ENCODE measurements at regions of chr17 and their contacts with region 1.

Region 1: DNA sequence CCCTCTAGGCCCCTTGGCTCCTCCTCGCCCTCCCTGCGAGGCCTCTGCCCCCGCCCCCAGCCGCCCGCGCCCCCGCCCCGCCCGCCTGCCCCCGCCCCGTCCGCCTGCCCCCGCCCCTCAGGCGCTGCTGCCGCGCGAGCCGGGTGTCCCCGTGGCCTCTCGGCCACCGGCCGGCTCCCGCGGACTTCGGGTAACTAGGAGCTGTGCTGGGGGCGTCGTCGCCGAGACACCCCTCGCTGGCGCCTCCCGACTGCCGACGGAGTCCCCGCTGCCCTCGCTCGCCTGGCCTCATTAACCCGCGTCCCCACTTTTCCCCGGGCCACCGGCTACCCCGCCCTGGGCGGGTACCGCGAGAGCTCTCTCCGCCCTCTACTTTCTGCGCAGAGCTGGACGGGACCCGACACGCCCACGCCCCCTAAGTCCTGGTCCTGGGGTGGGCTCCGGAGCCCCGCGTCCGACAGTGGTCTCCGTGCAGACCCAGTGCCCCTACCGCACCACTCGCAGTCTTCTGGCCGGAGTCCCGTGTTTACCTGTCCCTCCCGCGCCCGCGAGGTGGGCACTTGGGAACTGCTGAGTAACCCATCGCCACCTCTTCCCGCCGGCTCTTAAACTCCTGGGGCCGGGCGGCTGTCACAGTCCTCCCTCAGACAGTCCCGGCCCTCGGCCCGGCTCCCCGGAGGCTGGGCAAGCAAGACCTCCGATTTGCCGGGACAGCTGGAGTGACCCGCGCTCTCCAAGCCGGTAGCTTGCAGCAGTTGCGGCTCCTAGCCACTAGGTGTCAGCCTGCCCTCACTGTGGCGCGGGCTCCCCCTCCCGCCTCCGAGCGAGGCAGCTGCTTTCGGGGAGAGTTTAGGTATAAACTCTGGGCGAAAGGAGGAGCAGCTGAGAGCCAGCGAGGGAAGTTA is at the start of gene TLCD1:
- DNase-seq: peak; percentile 95
- ATAC-seq: peak; percentile 64
- H3K4me3 Mint-ChIP-seq: peak within 1 kb of the TSS; percentile 94
- H3K27ac Mint-ChIP-seq: peak within 1 kb of the TSS; percentile 99
- H3K4me1 Mint-ChIP-seq: peaks cover 64% of the 10 kb centered on the region
- H3K27me3 Mint-ChIP-seq: no peaks in the 10 kb centered on the region
- total RNA-seq, gene TLCD1: 2.8 to 3.0 TPM

Region 2: DNA sequence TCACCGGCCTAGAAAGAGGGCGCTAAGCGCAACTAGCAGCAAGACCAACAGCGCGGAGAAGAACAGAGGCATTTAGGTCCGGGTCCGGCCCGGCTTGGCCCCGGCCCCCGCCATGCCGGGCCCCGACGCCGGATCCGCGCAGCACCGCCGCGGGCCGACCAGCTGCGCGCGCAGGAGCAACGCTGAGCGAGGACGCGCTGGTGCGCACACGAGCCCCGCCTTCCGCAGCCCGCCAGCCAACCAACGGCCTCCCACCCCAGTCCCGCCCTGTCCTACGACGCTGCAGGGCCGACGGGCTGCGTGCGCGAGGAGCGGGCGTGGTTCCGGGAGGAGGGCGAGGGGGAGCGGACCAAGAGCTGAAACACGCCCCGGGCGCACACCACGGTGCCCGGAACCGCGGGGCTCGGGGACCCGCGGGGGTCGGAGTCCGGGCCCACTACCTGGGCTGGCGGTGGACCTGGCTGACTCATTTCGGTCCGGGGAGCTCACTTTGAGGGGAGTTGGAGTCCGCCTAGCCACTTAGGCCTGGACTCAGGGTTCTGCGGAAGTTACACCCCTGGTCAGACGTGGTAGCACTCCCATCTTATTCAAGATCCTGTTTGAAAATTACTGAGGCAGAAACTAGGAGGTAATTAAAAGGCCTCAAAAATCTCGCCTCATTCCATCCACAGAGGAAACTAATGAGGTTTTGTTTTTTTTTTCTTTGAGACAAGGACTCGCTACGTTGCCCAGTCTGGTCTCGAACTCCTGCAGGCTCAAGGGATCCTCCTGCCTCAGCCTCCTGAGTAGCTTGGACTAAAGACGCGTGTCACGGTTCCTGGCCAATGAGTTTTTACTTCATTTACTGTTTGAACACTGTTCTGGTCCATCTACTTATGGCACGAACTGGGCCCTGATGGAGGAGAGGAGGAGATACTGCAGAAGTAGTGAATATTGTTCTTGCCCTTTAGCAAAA is 81.2 kb before region 1 on chr17 and contains the start of gene BLTP2:
- CTCF ChIA-PET with region 1: interaction called, 15 read pairs
- POLR2A ChIA-PET with region 1: interaction called, 5 read pairs
- DNase-seq: peak; percentile 97
- ATAC-seq: peak; percentile 98
- H3K4me3 Mint-ChIP-seq: peak within 1 kb of the TSS; percentile 87
- H3K27ac Mint-ChIP-seq: peak within 1 kb of the TSS; percentile 84
- H3K4me1 Mint-ChIP-seq: peaks cover 39% of the 10 kb centered on the region
- H3K27me3 Mint-ChIP-seq: no peaks in the 10 kb centered on the region
- total RNA-seq, gene BLTP2: 162 to 169 TPM

Region 3: DNA sequence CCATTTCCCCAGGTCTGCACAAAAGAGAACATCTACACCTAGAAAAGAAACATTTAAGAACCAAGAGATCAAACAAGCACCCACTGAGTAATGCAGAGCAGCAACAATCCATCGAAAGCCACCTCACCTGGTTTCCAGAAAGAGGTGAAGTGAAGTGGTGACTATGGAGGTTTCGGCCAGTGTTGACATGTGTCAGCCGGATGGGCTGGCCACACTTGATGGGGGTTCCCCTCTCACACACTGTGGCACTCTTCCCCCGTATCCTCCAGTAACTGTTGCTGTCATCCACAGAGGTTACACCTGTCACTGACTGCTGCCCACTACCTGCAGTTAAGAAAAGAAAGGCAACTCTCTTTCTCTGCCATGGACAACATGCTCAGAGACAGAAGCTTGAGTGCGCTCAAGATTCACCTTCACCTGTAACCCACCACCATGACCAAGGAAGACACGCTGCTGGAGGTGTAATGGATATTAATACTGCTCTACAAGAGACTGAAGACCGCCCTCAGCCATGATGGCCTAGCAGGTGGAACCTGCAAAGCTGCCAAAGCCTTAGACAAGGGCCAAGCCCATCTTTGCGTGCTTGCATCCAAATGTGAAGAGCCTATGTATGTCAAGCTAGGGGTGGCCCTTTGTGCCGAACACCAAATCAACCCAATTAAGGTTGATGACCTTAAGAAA is 71.2 kb before region 1 on chr17:
- CTCF ChIA-PET with region 1: no interaction called
- POLR2A ChIA-PET with region 1: no interaction called
- DNase-seq: no peak
- ATAC-seq: no peak
- H3K4me3 Mint-ChIP-seq: no peak overlapping the region
- H3K27ac Mint-ChIP-seq: no peak overlapping the region
- H3K4me1 Mint-ChIP-seq: peaks cover 8% of the 10 kb centered on the region
- H3K27me3 Mint-ChIP-seq: no peaks in the 10 kb centered on the region

Region 4: GRCh38 chr17:28758411-28759121 is 32.1 kb after region 1 on chr17:
- CTCF ChIA-PET with region 1: interaction called, 736 read pairs
- POLR2A ChIA-PET with region 1: interaction called, 212 read pairs
- DNase-seq: no peak
- ATAC-seq: no peak
- H3K4me3 Mint-ChIP-seq: no peak overlapping the region
- H3K27ac Mint-ChIP-seq: no peak overlapping the region
- H3K4me1 Mint-ChIP-seq: peaks cover 19% of the 10 kb centered on the region
- H3K27me3 Mint-ChIP-seq: no peaks in the 10 kb centered on the region

Region 5: GRCh38 chr17:28871056-28871579 is 144.6 kb after region 1 on chr17:
- CTCF ChIA-PET with region 1: interaction called, 14 read pairs
- POLR2A ChIA-PET with region 1: no interaction called
- DNase-seq: peak; percentile 76
- ATAC-seq: peak; percentile 99
- H3K4me3 Mint-ChIP-seq: no peak overlapping the region
- H3K27ac Mint-ChIP-seq: peak overlapping the region; percentile 97
- H3K4me1 Mint-ChIP-seq: peaks cover 16% of the 10 kb centered on the region
- H3K27me3 Mint-ChIP-seq: no peaks in the 10 kb centered on the region

Region 6: DNA sequence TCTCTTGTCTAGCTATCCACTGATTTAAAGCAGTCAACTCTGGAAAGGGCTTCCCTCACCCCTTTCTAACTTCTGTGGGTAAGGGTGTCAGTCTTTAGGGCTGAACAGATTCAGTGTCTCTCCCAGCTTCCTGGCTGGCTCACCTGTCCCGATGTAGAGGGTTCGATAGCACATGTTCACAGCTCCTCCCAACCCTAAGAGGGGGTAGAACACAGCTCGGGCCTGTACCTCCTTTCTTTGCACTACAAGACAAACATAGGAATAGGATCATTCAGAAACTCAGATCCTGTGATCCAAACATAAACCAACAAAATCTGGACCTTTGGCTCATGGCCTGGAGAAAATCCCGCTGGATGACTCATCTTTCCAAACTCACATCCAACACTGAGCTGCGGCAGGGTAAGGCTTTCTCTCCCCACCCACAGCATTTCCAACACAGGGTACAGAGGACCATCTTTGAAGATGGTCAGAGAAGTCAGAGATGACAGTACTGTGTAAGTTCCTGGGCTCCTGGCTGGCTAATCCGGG is 182.2 kb after region 1 on chr17:
- CTCF ChIA-PET with region 1: interaction called, 41 read pairs
- POLR2A ChIA-PET with region 1: interaction called, 14 read pairs
- DNase-seq: no peak
- ATAC-seq: no peak
- H3K4me3 Mint-ChIP-seq: no peak overlapping the region
- H3K27ac Mint-ChIP-seq: no peak overlapping the region
- H3K4me1 Mint-ChIP-seq: no peaks in the 10 kb centered on the region
- H3K27me3 Mint-ChIP-seq: no peaks in the 10 kb centered on the region

Region 7: GRCh38 chr17:28946239-28946638 is 219.8 kb after region 1 on chr17:
- CTCF ChIA-PET with region 1: interaction called, 84 read pairs
- POLR2A ChIA-PET with region 1: interaction called, 16 read pairs
- DNase-seq: no peak
- ATAC-seq: no peak
- H3K4me3 Mint-ChIP-seq: peak overlapping the region; percentile 31
- H3K27ac Mint-ChIP-seq: peak overlapping the region; percentile 60
- H3K4me1 Mint-ChIP-seq: peaks cover 59% of the 10 kb centered on the region
- H3K27me3 Mint-ChIP-seq: no peaks in the 10 kb centered on the region